Activated CD8-positive, alpha-beta T cell treated with anti-CD3 and anti-CD28 coated beads, Interleukin-2, amount 10 ng/mL, durations not matched to agents 7 days and 5 days (primary cell): ENCODE measurements at regions of chr20 and their contacts with region 1.

Region 1: DNA sequence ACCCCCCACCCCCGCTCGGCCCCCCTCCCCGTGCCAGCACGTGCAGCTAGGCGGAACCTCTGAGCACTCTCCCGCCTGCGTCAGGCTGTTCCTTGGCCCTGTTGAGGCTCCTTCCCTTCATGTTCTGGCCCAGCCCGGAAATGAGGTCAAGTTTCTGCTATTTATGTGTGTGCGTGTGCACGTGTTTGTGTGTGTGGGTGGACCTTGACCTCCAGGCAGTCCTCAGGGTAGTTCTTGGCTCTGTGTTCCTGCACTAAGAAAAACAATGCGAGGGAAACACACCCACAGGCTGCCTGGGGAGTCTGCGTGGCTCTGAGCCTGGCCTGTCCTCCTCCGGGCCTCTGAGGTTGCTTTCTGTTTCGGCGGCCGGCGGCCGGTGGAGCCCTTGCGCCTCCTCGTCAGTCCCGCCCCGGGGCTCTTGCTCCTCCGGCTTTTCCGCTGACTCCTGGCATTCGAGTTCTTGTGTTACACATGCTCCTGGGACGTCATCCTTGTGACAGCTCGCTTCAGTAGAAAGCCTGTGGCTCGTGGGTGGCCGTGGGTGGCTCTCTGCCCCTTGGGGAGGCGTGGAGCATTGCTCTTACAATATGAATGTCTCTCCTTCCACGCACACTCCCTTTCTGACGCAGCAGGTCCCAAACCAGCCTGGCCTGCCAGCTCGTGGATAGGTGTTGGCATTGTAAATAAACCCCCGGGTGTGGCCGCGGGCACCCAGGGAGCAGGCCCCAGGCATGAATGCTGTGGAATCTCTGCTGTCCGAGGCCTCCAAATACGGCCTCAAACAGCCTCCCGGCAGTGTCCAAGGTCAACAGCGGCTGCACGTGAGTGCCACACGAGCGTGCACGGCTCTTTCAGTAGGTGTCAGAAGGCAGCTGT is 10.0 kb downstream of the SLCO4A1 start:
- DNase-seq: peak; percentile 84
- ATAC-seq: peak; percentile 63
- H3K4me3 Mint-ChIP-seq: peak overlapping the region; percentile 75
- H3K27ac Mint-ChIP-seq: peak overlapping the region; percentile 96
- H3K4me1 Mint-ChIP-seq: peaks cover 67% of the 10 kb centered on the region
- H3K27me3 Mint-ChIP-seq: no peaks in the 10 kb centered on the region

Region 2: GRCh38 chr20:62603021-62603906 is 49.0 kb before region 1 on chr20:
- CTCF ChIA-PET with region 1: no interaction called
- POLR2A ChIA-PET with region 1: interaction called, 10 read pairs
- DNase-seq: peak; percentile 77
- ATAC-seq: peak; percentile 75
- H3K4me3 Mint-ChIP-seq: peak overlapping the region; percentile 56
- H3K27ac Mint-ChIP-seq: peak overlapping the region; percentile 87
- H3K4me1 Mint-ChIP-seq: peaks cover 55% of the 10 kb centered on the region
- H3K27me3 Mint-ChIP-seq: peaks cover 28% of the 10 kb centered on the region

Region 3: DNA sequence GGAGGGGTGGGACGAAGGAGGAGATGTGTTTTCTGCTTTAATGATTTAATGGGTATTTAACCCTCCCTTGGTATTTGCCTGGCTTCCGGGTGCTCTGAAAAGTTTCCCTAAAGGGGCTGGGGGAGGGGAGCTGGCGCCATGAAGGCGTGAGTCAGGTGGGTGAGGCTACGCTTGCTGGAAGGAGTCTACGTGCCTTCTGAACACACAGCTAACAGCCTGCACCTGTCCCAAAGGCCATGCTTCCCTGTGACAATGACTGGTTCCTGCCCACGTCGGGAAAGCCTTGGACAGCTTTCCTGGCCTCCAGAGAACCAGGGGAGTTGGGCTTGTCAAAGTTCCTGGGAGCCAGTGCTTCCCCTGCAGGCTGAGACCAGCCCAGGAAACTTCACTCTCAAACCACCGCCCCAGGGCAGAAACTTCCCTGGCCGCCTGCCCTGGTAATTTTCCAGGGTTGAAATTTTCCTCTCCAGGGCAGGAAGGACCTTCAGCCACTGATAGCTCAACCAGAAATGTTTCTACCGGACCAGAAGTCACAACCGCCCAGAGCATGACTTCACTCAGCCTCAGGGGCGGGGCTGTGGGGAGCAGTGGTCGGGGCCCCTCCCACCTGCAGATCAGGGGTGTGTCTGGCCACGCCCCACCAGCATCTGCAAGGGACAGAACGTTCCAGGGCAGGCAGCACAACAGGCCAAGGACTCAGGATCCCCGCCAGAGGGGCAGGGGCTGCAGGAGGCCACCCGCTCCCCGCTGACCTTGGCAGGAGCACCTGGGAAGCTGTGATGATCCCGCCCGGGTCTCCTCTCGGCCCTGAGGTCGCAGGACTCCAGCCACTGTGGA is 28.6 kb before region 1 on chr20:
- CTCF ChIA-PET with region 1: interaction called, 15 read pairs
- POLR2A ChIA-PET with region 1: interaction called, 11 read pairs
- DNase-seq: peak; percentile 96
- ATAC-seq: peak; percentile 95
- H3K4me3 Mint-ChIP-seq: peak overlapping the region; percentile 73
- H3K27ac Mint-ChIP-seq: peak overlapping the region; percentile 95
- H3K4me1 Mint-ChIP-seq: peaks cover 50% of the 10 kb centered on the region
- H3K27me3 Mint-ChIP-seq: no peaks in the 10 kb centered on the region

Region 4: DNA sequence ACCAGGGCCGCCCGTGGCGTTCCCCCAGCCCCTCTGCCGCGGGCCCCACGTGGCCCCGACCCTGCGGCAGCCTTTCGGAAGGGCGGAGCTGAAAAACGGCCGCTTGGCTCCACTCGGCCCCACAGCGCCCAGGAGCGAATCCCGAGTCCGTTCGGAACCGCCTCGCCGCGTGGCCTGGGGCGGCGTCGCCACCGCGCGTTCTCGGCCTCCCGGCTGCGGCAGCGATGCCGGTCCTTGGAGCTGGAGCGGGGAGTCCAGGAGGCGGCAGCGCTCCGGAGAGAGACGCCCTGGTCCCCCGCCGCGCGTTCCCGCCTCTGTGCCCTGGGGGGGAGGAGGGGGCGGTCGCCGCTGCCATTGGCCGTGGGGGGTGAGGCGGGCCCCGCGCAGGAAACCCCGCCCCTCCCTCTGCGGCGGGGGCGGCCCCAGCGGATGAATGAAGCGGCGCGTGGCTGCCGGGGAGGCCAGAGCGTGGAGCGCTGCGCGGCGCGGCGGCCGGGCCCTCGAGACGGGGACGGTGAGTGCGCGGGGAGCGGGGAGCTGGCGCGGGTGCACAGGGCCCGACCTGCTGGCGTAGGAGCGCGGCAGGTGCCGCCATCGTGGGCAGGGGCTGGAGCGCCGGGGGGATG is 10.1 kb before region 1 on chr20 and contains the start of gene SLCO4A1:
- CTCF ChIA-PET with region 1: interaction called, 15 read pairs
- POLR2A ChIA-PET with region 1: interaction called, 24 read pairs
- DNase-seq: peak; percentile 92
- ATAC-seq: peak; percentile 86
- H3K4me3 Mint-ChIP-seq: peak within 1 kb of the TSS; percentile 88
- H3K27ac Mint-ChIP-seq: peak within 1 kb of the TSS; percentile 91
- H3K4me1 Mint-ChIP-seq: peaks cover 48% of the 10 kb centered on the region
- H3K27me3 Mint-ChIP-seq: peaks cover 8% of the 10 kb centered on the region
- total RNA-seq, gene SLCO4A1: 79.4 to 79.9 TPM

Region 5: GRCh38 chr20:62692176-62692575 is 39.9 kb after region 1 on chr20:
- CTCF ChIA-PET with region 1: no interaction called
- POLR2A ChIA-PET with region 1: no interaction called
- DNase-seq: no peak
- ATAC-seq: no peak
- H3K4me3 Mint-ChIP-seq: no peak overlapping the region
- H3K27ac Mint-ChIP-seq: no peak overlapping the region
- H3K4me1 Mint-ChIP-seq: peaks cover 5% of the 10 kb centered on the region
- H3K27me3 Mint-ChIP-seq: peaks cover 3% of the 10 kb centered on the region

Region 6: GRCh38 chr20:62808211-62808865 is 156.0 kb after region 1 on chr20:
- CTCF ChIA-PET with region 1: interaction called, 17 read pairs
- POLR2A ChIA-PET with region 1: no interaction called
- DNase-seq: peak; percentile 80
- ATAC-seq: peak; percentile 50
- H3K4me3 Mint-ChIP-seq: peak overlapping the region; percentile 29
- H3K27ac Mint-ChIP-seq: no peak overlapping the region
- H3K4me1 Mint-ChIP-seq: peaks cover 31% of the 10 kb centered on the region
- H3K27me3 Mint-ChIP-seq: no peaks in the 10 kb centered on the region